Endothelial cell of umbilical vein (primary cell): ENCODE measurements at regions of chr19 and their contacts with region 1.

Region 1: GRCh38 chr19:44689056-44689895 is 9.7 kb upstream of the CEACAM16 start:
- DNase-seq: peak; percentile 70
- H3K4me3 ChIP-seq: no peak overlapping the region
- H3K27ac ChIP-seq: no peak overlapping the region
- H3K4me1 ChIP-seq: peaks cover 30% of the 10 kb centered on the region
- H3K27me3 ChIP-seq: no peaks in the 10 kb centered on the region
- CTCF ChIP-seq: peak; percentile 79 to 96
- POLR2A ChIP-seq: no peak

Region 2: GRCh38 chr19:44648402-44649251 is 40.6 kb before region 1 on chr19:
- CTCF ChIA-PET with region 1: no interaction called
- POLR2A ChIA-PET with region 1: no interaction called
- dilution Hi-C with region 1: no loop called
- intact Hi-C with region 1: no loop called
- DNase-seq: peak; percentile 46
- H3K4me3 ChIP-seq: no peak overlapping the region
- H3K27ac ChIP-seq: peak overlapping the region; percentile 21
- H3K4me1 ChIP-seq: peaks cover 35% of the 10 kb centered on the region
- H3K27me3 ChIP-seq: no peaks in the 10 kb centered on the region
- CTCF ChIP-seq: no peak
- POLR2A ChIP-seq: no peak

Region 3: DNA sequence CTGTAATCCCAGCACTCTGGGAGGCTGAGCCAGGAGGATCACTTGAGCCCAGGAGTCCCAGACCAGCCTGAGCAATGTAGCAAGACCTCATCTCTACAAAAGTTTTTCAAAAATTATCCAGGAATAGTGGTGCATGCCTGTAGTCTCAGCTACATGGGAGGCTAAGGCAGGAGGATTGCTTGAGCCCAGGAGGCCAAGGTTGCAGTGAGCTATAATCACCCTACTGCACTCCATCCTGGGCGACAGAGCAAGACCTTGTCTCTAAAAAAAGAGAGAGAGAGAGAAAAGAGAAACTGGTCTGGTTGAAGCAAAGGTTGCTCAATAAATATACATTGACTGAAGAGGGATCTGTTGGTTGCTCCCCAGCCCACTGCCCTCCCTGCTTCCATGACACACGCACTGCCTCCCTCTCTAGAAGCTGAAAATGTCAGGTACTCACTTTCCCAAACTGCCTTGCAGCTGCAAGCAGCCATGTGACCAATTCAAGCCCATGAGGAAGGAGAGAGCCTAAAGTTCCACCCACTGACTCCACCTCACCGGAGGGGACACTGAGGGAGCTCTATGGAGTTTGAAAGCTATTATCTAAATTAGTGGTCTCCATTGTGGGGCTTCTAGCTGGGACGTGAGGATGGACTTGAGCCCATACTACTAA is 23.7 kb after region 1 on chr19:
- CTCF ChIA-PET with region 1: interaction called, 239 read pairs
- POLR2A ChIA-PET with region 1: interaction called, 3 read pairs
- dilution Hi-C with region 1: no loop called
- intact Hi-C with region 1: loop called (anchors 1 kb)
- DNase-seq: no peak
- H3K4me3 ChIP-seq: no peak overlapping the region
- H3K27ac ChIP-seq: no peak overlapping the region
- H3K4me1 ChIP-seq: peaks cover 12% of the 10 kb centered on the region
- H3K27me3 ChIP-seq: no peaks in the 10 kb centered on the region
- CTCF ChIP-seq: no peak
- POLR2A ChIP-seq: no peak

Region 4: DNA sequence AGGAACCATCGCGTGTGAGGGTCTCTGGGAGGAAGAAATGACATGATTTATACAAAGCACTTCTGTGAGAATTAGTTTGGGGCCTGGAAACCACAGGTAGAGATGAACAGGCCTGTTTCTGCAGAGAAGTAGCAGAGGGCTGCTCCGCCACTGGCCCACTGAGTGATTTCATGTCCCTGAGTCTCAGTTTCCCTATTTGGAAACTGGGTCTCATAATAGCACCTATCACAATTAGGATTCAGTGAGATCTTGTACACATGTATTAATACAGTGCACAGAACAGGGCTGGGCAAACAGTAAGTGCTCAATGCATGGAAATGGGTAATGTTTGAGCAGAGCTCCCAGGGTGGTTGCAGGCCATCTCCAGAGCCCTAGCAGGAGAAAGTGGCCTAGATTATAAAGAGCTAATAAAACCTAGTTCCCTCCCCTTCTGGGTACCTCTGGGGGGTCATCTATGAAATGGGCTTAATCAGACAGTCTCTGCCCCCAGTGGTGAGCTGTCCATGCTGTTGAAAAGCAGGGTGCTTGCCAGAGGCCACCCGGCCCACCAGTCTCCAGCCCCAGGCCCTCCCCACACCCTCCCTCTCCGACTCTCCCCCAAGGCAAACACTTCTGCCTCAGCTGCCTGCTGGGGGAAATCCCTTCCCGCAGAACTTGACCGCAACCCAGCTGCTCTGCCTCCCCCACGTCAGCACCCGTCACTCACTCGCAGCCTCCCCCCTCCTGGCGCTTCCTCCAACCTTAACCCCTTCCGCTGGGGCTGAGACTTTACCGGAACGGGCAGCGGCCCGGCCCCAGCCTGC is 63.7 kb after region 1 on chr19:
- CTCF ChIA-PET with region 1: interaction called, 11 read pairs
- POLR2A ChIA-PET with region 1: no interaction called
- dilution Hi-C with region 1: no loop called
- intact Hi-C with region 1: loop called (anchors 5 kb)
- DNase-seq: peak; percentile 91
- H3K4me3 ChIP-seq: peak overlapping the region in 1 of 3 experiments; percentile 17
- H3K27ac ChIP-seq: peak overlapping the region; percentile 86
- H3K4me1 ChIP-seq: peaks cover 44% of the 10 kb centered on the region
- H3K27me3 ChIP-seq: no peaks in the 10 kb centered on the region
- CTCF ChIP-seq: no peak
- POLR2A ChIP-seq: peak; percentile 40

Region 5: GRCh38 chr19:44782729-44783128 is 93.5 kb after region 1 on chr19:
- CTCF ChIA-PET with region 1: interaction called, 15 read pairs
- POLR2A ChIA-PET with region 1: no interaction called
- dilution Hi-C with region 1: no loop called
- intact Hi-C with region 1: no loop called
- DNase-seq: no peak
- H3K4me3 ChIP-seq: no peak overlapping the region
- H3K27ac ChIP-seq: no peak overlapping the region
- H3K4me1 ChIP-seq: no peaks in the 10 kb centered on the region
- H3K27me3 ChIP-seq: no peaks in the 10 kb centered on the region
- CTCF ChIP-seq: no peak
- POLR2A ChIP-seq: no peak